Breast epithelium (tissue), 4 donors: ENCODE measurements at regions of chr18 and their contacts with region 1.

Region 1: GRCh38 chr18:59272971-59273935 is at the start of gene RAX:
- DNase-seq: no peak
- H3K4me3 ChIP-seq: peak within 1 kb of the TSS; percentile 28 to 57 (median 29)
- H3K27ac ChIP-seq: no peak within 1 kb of the TSS
- H3K4me1 ChIP-seq: no peaks in the 10 kb centered on the region
- H3K27me3 ChIP-seq: peaks cover 11 to 86% of the 10 kb centered on the region in 2 donors
- CTCF ChIP-seq: no peak
- POLR2A ChIP-seq: no peak
- total RNA-seq, gene RAX: not detected

Region 2: GRCh38 chr18:59200787-59201186 is 72.5 kb before region 1 on chr18:
- intact Hi-C with region 1: no loop called
- DNase-seq: no peak
- H3K4me3 ChIP-seq: no peak overlapping the region
- H3K27ac ChIP-seq: no peak overlapping the region
- H3K4me1 ChIP-seq: no peaks in the 10 kb centered on the region
- H3K27me3 ChIP-seq: no peaks in the 10 kb centered on the region
- CTCF ChIP-seq: no peak
- POLR2A ChIP-seq: no peak

Region 3: GRCh38 chr18:59286341-59286740 is 13.1 kb after region 1 on chr18:
- intact Hi-C with region 1: no loop called
- DNase-seq: no peak
- H3K4me3 ChIP-seq: no peak overlapping the region
- H3K27ac ChIP-seq: no peak overlapping the region
- H3K4me1 ChIP-seq: no peaks in the 10 kb centered on the region
- H3K27me3 ChIP-seq: peaks cover 0 to 14% of the 10 kb centered on the region in 2 donors
- CTCF ChIP-seq: no peak
- POLR2A ChIP-seq: no peak

Region 4: GRCh38 chr18:59685501-59685900 is 412.2 kb after region 1 on chr18:
- intact Hi-C with region 1: loop called (anchors 5 kb)
- DNase-seq: no peak
- H3K4me3 ChIP-seq: no peak overlapping the region
- H3K27ac ChIP-seq: no peak overlapping the region
- H3K4me1 ChIP-seq: no peaks in the 10 kb centered on the region
- H3K27me3 ChIP-seq: no peaks in the 10 kb centered on the region
- CTCF ChIP-seq: no peak
- POLR2A ChIP-seq: no peak